GM12878 (cell line): ENCODE measurements at regions of chr10 and their contacts with region 1.

Region 1: GRCh38 chr10:71893920-71894319 is 42.9 kb upstream of the PSAP start:
- DNase-seq: no peak
- ATAC-seq: no peak
- H3K4me3 ChIP-seq: no peak overlapping the region
- H3K27ac ChIP-seq: no peak overlapping the region
- H3K4me1 ChIP-seq: peaks cover 16% of the 10 kb centered on the region
- H3K27me3 ChIP-seq: no peaks in the 10 kb centered on the region
- CTCF ChIP-seq: no peak
- EP300 ChIP-seq: no peak
- POLR2A ChIP-seq: no peak
- RAD21 ChIP-seq: no peak

Region 2: GRCh38 chr10:71319042-71319799 is 574.7 kb before region 1 on chr10 and contains the start of gene SLC29A3:
- CTCF ChIA-PET with region 1: interaction called, 8 read pairs
- POLR2A ChIA-PET with region 1: no interaction called
- RAD21 ChIA-PET with region 1: interaction called, 3 read pairs
- SMC1A ChIA-PET with region 1: interaction called, 3 read pairs
- in situ Hi-C with region 1: loop called (anchors 10 kb)
- intact Hi-C with region 1: loop called (anchors 5 kb)
- DNase-seq: no peak
- ATAC-seq: peak; percentile 96
- H3K4me3 ChIP-seq: peak within 1 kb of the TSS; percentile 82
- H3K27ac ChIP-seq: peak within 1 kb of the TSS; percentile 6; the same call in 1 of the 2 replicates
- H3K4me1 ChIP-seq: peaks cover 8% of the 10 kb centered on the region
- H3K27me3 ChIP-seq: no peaks in the 10 kb centered on the region
- CTCF ChIP-seq: peak; percentile 71 to 77 (median 73)
- EP300 ChIP-seq: no peak
- POLR2A ChIP-seq: peak; percentile 82
- RAD21 ChIP-seq: peak; percentile 66
- polyA plus RNA-seq, gene SLC29A3: 2.1 to 2.5 TPM

Region 3: DNA sequence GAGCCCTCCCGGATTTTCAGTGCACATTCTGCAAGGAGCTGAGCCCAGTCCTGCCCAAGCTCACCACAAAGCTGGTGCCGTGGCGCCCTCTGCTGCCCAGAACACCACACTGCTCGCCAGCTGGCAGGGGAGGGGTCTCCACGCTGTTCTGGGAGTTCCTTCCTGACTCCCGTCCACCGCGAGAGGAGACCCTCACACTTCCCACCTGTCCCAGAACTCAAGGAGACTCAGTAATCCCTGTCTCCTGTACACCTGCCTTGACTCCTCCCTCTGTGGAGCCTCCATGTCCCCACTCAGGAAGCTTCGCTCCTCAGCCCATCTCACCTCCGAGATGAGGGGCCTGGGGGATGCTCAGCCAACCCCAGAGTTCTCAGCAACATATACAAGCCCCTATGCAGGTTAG is 185.6 kb before region 1 on chr10:
- CTCF ChIA-PET with region 1: interaction called, 9 read pairs
- POLR2A ChIA-PET with region 1: no interaction called
- RAD21 ChIA-PET with region 1: interaction called, 4 read pairs
- SMC1A ChIA-PET with region 1: interaction called, 15 read pairs
- in situ Hi-C with region 1: no loop called
- intact Hi-C with region 1: no loop called
- DNase-seq: no peak
- ATAC-seq: peak; percentile 88
- H3K4me3 ChIP-seq: no peak overlapping the region
- H3K27ac ChIP-seq: no peak overlapping the region
- H3K4me1 ChIP-seq: peaks cover 8% of the 10 kb centered on the region
- H3K27me3 ChIP-seq: no peaks in the 10 kb centered on the region; a peak in 1 of 4 replicates
- CTCF ChIP-seq: peak; percentile 82 to 97 (median 93)
- EP300 ChIP-seq: no peak
- POLR2A ChIP-seq: no peak
- RAD21 ChIP-seq: peak; percentile 89

Region 4: DNA sequence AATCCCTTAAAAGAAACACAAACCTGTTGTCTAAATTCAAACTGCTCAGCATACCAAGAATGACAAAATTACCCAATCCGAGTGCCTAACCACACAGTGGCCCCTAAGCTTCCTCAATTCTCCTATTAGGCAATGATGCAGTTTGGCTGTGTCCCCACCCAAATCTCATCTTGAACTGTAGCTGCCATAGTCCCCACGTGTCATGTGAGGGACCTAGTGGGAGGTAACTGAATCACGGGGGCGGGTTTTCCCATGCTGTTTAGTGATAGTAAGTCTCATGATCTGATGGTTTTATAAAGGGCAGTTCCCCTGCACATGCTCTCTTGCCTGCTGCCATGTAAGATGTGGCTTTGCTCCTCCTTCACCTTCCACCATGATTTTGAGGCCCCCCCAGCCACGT is 64.7 kb before region 1 on chr10:
- CTCF ChIA-PET with region 1: interaction called, 104 read pairs
- POLR2A ChIA-PET with region 1: no interaction called
- RAD21 ChIA-PET with region 1: interaction called, 39 read pairs
- SMC1A ChIA-PET with region 1: interaction called, 17 read pairs
- in situ Hi-C with region 1: no loop called
- intact Hi-C with region 1: no loop called
- DNase-seq: no peak
- ATAC-seq: no peak
- H3K4me3 ChIP-seq: no peak overlapping the region
- H3K27ac ChIP-seq: no peak overlapping the region
- H3K4me1 ChIP-seq: peaks cover 12% of the 10 kb centered on the region
- H3K27me3 ChIP-seq: no peaks in the 10 kb centered on the region
- CTCF ChIP-seq: no peak
- EP300 ChIP-seq: no peak
- POLR2A ChIP-seq: no peak
- RAD21 ChIP-seq: no peak

Region 5: DNA sequence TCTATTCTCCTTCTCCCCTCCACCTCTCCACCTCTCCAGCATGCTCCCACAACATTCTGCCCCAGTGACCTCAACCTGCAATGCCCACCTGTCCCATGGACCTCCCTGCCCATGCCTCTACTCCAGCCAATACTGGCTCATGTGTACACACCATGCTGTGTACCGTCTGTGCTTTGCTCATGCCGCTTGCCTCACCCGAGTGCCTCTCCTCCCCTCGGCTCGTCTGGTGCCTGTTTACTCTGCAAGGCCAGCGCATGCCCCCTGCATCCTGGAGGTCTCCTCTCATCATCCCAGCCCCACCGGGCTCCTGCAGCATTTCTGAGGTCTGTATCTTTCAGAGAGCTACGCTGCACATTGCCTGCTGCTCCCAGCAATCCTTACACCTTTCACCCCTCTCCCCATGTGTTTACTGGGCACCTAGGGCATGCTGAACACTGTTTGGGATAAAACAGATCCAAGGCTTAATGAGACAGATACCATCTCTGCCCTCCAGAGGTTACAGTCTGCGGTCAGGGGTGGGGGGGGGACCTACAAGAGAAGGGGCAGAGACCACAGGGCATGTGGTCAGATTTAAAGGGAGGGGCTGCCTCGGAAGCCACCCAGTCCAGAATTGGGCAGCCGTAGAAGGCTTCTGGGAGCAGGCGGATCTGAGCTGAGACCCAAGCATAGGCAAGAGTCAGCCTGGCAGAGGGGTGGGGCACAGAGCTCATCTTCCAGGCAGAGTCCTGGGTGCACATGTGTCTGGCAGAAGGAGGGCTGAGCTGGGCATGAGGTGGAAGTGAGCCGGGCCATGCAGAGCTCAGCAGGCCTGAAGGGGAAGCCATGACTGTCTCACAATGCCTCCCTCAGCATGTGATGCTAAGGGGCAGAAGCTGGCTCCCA is 13.3 kb before region 1 on chr10:
- CTCF ChIA-PET with region 1: interaction called, 12 read pairs
- POLR2A ChIA-PET with region 1: no interaction called
- RAD21 ChIA-PET with region 1: no interaction called
- SMC1A ChIA-PET with region 1: interaction called, 3 read pairs
- in situ Hi-C with region 1: no loop called
- intact Hi-C with region 1: no loop called
- DNase-seq: no peak
- ATAC-seq: peak; percentile 41
- H3K4me3 ChIP-seq: no peak overlapping the region
- H3K27ac ChIP-seq: no peak overlapping the region
- H3K4me1 ChIP-seq: peaks cover 9% of the 10 kb centered on the region
- H3K27me3 ChIP-seq: no peaks in the 10 kb centered on the region
- CTCF ChIP-seq: no peak
- EP300 ChIP-seq: no peak
- POLR2A ChIP-seq: no peak
- RAD21 ChIP-seq: no peak

Region 6: DNA sequence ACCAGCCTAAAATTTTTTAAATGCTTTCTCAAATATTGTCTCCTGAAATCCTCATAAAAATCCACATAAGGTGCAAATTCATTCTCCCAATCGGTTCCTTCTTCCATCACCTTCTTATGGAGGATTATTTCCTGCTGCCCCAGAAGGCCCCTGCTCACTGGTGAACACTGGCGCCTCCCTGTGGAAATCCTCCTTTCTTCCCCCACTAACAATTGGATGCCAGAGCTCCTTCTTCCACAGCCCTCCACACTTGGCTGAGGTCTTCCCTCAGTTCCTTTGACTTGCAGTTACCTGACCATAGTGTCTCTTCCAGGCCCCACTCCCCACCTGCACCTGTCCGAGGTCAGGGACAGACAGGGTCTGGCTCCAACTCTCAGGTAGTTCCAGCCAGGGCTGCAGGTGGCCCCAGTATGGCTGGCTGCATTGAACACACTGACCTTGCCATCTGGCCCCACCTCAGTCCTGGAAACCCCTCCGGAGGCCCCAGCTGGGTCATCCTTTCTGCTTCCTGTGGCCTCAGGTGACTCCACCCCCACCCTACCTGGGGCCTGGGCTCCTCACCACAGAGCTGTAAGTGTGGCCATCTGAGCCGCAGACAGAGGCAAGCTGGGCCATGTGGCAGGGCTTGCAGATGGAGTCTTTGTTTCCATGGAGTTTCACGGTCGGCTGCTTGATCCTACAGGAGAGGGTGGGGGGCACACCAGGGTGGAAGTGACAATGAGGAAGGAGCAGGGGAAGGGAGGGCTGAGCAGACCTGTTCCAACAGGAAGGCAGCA is 176.0 kb after region 1 on chr10:
- CTCF ChIA-PET with region 1: interaction called, 10 read pairs
- POLR2A ChIA-PET with region 1: interaction called, 3 read pairs
- RAD21 ChIA-PET with region 1: interaction called, 6 read pairs
- SMC1A ChIA-PET with region 1: interaction called, 3 read pairs
- in situ Hi-C with region 1: no loop called
- intact Hi-C with region 1: no loop called
- DNase-seq: no peak
- ATAC-seq: no peak; the same call in 2 of the 3 replicates
- H3K4me3 ChIP-seq: no peak overlapping the region
- H3K27ac ChIP-seq: no peak overlapping the region
- H3K4me1 ChIP-seq: peaks cover 1% of the 10 kb centered on the region
- H3K27me3 ChIP-seq: no peaks in the 10 kb centered on the region
- CTCF ChIP-seq: peak in 2 of 3 experiments; percentile 19 to 25; a peak in 3 of 6 replicates
- EP300 ChIP-seq: no peak
- POLR2A ChIP-seq: no peak
- RAD21 ChIP-seq: peak; percentile 33; the same call in 1 of the 2 replicates